B cell (primary cell): ENCODE measurements at regions of chr19 and their contacts with region 1.

Region 1: DNA sequence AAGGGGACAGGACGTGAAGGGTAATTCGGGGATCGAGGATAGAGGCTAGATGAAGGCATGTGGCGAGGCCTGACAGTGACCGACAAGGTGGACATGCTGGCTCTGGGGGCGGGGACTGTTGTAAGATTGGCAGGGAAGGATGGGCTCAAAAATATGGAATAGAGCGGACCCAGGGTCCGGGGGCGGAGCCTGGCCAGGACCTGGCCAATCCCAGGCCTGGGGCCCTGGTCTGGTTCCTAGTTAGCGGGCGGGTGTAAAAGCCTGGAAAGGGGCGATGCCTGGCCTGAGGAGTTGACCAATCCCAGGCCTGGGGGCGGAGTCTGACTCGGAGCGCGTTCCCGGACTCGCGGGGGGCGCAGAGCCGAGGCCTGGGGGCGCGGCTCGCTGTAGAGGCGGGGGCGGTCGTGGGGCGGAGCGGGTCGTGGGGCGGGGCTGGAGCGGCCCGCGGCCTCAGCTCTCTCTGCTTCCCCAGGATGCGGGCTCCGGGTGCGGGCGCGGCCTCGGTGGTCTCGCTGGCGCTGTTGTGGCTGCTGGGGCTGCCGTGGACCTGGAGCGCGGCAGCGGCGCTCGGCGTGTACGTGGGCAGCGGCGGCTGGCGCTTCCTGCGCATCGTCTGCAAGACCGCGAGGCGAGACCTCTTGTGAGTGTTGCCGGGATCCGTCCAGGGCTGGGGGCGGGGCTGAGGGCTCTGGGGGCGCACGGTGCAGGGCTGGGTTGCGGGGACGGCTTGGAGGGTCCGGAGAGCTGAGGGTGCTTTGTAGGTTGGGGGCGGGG is at the start of gene SLC27A1:
- DNase-seq: peak; percentile 94
- ATAC-seq: peak; percentile 78
- H3K4me3 ChIP-seq: peak within 1 kb of the TSS; percentile 30 to 81 (median 76)
- H3K4me3 Mint-ChIP-seq: peak within 1 kb of the TSS; percentile 92
- H3K27ac ChIP-seq: peak within 1 kb of the TSS; percentile 59 to 62
- H3K27ac Mint-ChIP-seq: peak within 1 kb of the TSS; percentile 90
- H3K4me1 ChIP-seq: peaks cover 6 to 22% of the 10 kb centered on the region in 2 donors
- H3K4me1 Mint-ChIP-seq: peaks cover 28% of the 10 kb centered on the region
- H3K27me3 ChIP-seq: no peaks in the 10 kb centered on the region
- H3K27me3 Mint-ChIP-seq: no peaks in the 10 kb centered on the region
- CTCF ChIP-seq: no peak
- total RNA-seq, gene SLC27A1: 9.5 and 11.5 TPM in 2 replicates

Region 2: GRCh38 chr19:17107525-17108452 is 362.5 kb before region 1 on chr19:
- CTCF ChIA-PET with region 1: no interaction called
- POLR2A ChIA-PET with region 1: no interaction called
- intact Hi-C with region 1: no loop called
- DNase-seq: peak; percentile 35
- ATAC-seq: no peak
- H3K4me3 ChIP-seq: no peak overlapping the region
- H3K4me3 Mint-ChIP-seq: peak overlapping the region; percentile 72
- H3K27ac ChIP-seq: peak overlapping the region; percentile 18 to 45
- H3K27ac Mint-ChIP-seq: peak overlapping the region; percentile 87
- H3K4me1 ChIP-seq: peaks cover 88 to 97% of the 10 kb centered on the region in 2 donors
- H3K4me1 Mint-ChIP-seq: peaks cover 87% of the 10 kb centered on the region
- H3K27me3 ChIP-seq: no peaks in the 10 kb centered on the region
- H3K27me3 Mint-ChIP-seq: no peaks in the 10 kb centered on the region
- CTCF ChIP-seq: no peak

Region 3: GRCh38 chr19:17135001-17135853 is 335.0 kb before region 1 on chr19:
- CTCF ChIA-PET with region 1: no interaction called
- POLR2A ChIA-PET with region 1: no interaction called
- intact Hi-C with region 1: no loop called
- DNase-seq: peak; percentile 88
- ATAC-seq: peak; percentile 88
- H3K4me3 ChIP-seq: peak overlapping the region in 3 of 5 experiments; percentile 22 to 49 (median 31)
- H3K4me3 Mint-ChIP-seq: peak overlapping the region; percentile 86
- H3K27ac ChIP-seq: peak overlapping the region; percentile 87 to 95
- H3K27ac Mint-ChIP-seq: peak overlapping the region; percentile 96
- H3K4me1 ChIP-seq: peaks cover 38 to 55% of the 10 kb centered on the region in 2 donors
- H3K4me1 Mint-ChIP-seq: peaks cover 60% of the 10 kb centered on the region
- H3K27me3 ChIP-seq: no peaks in the 10 kb centered on the region
- H3K27me3 Mint-ChIP-seq: no peaks in the 10 kb centered on the region
- CTCF ChIP-seq: no peak

Region 4: DNA sequence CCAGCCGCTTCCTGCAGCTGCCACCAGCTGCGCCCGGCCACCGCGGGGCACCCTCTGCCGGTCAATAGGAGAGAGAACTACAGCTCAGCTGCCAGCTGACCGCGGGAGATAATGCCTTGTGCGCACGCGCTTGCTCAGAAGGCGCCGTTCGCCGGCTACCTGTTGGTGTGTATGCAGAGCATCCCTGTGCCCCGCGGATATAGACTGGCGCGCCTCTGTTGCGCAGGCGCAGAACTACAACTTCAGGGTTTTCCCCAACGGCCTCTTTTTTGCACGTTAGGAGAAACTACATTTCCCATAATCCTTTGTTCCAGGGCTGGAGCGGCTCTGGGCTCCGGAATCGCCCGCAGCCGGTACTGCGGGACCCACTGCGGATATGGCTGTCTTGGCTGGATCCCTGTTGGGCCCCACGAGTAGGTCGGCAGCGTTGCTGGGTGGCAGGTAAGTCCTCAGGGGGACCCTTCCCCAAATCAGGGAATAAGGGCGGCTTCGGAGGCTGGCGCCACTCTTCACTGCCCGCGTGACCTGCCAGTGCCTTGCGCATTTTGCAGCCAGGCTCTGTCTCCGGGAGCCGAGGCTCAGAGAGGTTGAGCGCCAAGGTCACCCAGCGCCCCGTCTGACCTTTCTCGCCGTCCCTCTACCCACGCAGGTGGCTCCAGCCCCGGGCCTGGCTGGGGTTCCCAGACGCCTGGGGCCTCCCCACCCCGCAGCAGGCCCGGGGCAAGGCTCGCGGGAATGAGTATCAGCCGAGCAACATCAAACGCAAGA is 164.6 kb before region 1 on chr19 and contains the start of gene MRPL34:
- CTCF ChIA-PET with region 1: interaction called, 3 read pairs
- POLR2A ChIA-PET with region 1: no interaction called
- intact Hi-C with region 1: loop called (anchors 1 kb)
- DNase-seq: peak; percentile 100
- ATAC-seq: peak; percentile 69
- H3K4me3 ChIP-seq: peak within 1 kb of the TSS; percentile 49 to 74 (median 73)
- H3K4me3 Mint-ChIP-seq: peak within 1 kb of the TSS; percentile 91
- H3K27ac ChIP-seq: peak within 1 kb of the TSS; percentile 70 to 71
- H3K27ac Mint-ChIP-seq: peak within 1 kb of the TSS; percentile 90
- H3K4me1 ChIP-seq: peaks cover 38 to 56% of the 10 kb centered on the region in 2 donors
- H3K4me1 Mint-ChIP-seq: peaks cover 56% of the 10 kb centered on the region
- H3K27me3 ChIP-seq: no peaks in the 10 kb centered on the region
- H3K27me3 Mint-ChIP-seq: no peaks in the 10 kb centered on the region
- CTCF ChIP-seq: peak; percentile 76
- total RNA-seq, gene MRPL34: 40.7 and 45.7 TPM in 2 replicates

Region 5: GRCh38 chr19:17327651-17328516 is 142.4 kb before region 1 on chr19:
- CTCF ChIA-PET with region 1: no interaction called
- POLR2A ChIA-PET with region 1: no interaction called
- intact Hi-C with region 1: no loop called
- DNase-seq: peak; percentile 81
- ATAC-seq: peak; percentile 84
- H3K4me3 ChIP-seq: peak overlapping the region in 4 of 5 experiments; percentile 52 to 70 (median 65)
- H3K4me3 Mint-ChIP-seq: peak overlapping the region; percentile 83
- H3K27ac ChIP-seq: no peak overlapping the region
- H3K27ac Mint-ChIP-seq: peak overlapping the region; percentile 59
- H3K4me1 ChIP-seq: peaks cover 13 to 17% of the 10 kb centered on the region in 2 donors
- H3K4me1 Mint-ChIP-seq: peaks cover 13% of the 10 kb centered on the region
- H3K27me3 ChIP-seq: peaks cover 0 to 25% (median 1%) of the 10 kb centered on the region in 4 experiments
- H3K27me3 Mint-ChIP-seq: peaks cover 6% of the 10 kb centered on the region
- CTCF ChIP-seq: no peak

Region 6: GRCh38 chr19:17390665-17391370 is 79.4 kb before region 1 on chr19:
- CTCF ChIA-PET with region 1: interaction called, 14 read pairs
- POLR2A ChIA-PET with region 1: no interaction called
- intact Hi-C with region 1: loop called (anchors 1 kb)
- DNase-seq: peak; percentile 91
- ATAC-seq: peak; percentile 100
- H3K4me3 ChIP-seq: peak overlapping the region in 4 of 5 experiments; percentile 41 to 69 (median 58)
- H3K4me3 Mint-ChIP-seq: peak overlapping the region; percentile 91
- H3K27ac ChIP-seq: no peak overlapping the region
- H3K27ac Mint-ChIP-seq: peak overlapping the region; percentile 41
- H3K4me1 ChIP-seq: peaks cover 23 to 29% of the 10 kb centered on the region in 2 donors
- H3K4me1 Mint-ChIP-seq: peaks cover 21% of the 10 kb centered on the region
- H3K27me3 ChIP-seq: peaks cover 0 to 22% (median 9%) of the 10 kb centered on the region in 4 experiments
- H3K27me3 Mint-ChIP-seq: no peaks in the 10 kb centered on the region
- CTCF ChIP-seq: peak; percentile 68

Region 7: GRCh38 chr19:17448131-17448967 is 21.9 kb before region 1 on chr19 and contains the start of gene TMEM221:
- CTCF ChIA-PET with region 1: interaction called, 8 read pairs
- POLR2A ChIA-PET with region 1: no interaction called
- intact Hi-C with region 1: loop called (anchors 1 kb)
- DNase-seq: peak; percentile 73
- ATAC-seq: peak; percentile 86
- H3K4me3 ChIP-seq: peak within 1 kb of the TSS in 3 of 5 experiments; percentile 3 to 29 (median 15)
- H3K4me3 Mint-ChIP-seq: peak within 1 kb of the TSS; percentile 48
- H3K27ac ChIP-seq: no peak within 1 kb of the TSS
- H3K27ac Mint-ChIP-seq: no peak within 1 kb of the TSS
- H3K4me1 ChIP-seq: peaks cover 6 to 12% of the 10 kb centered on the region in 2 donors
- H3K4me1 Mint-ChIP-seq: peaks cover 13% of the 10 kb centered on the region
- H3K27me3 ChIP-seq: peaks cover 0 to 53% (median 15%) of the 10 kb centered on the region in 4 experiments
- H3K27me3 Mint-ChIP-seq: peaks cover 28% of the 10 kb centered on the region
- CTCF ChIP-seq: peak; percentile 68
- total RNA-seq, gene TMEM221: not detected in 2 replicates

Region 8: GRCh38 chr19:17522988-17523872 is 53.0 kb after region 1 on chr19:
- CTCF ChIA-PET with region 1: interaction called, 4 read pairs
- POLR2A ChIA-PET with region 1: interaction called, 5 read pairs
- intact Hi-C with region 1: loop called (anchors 1 kb)
- DNase-seq: peak; percentile 92
- ATAC-seq: peak; percentile 71
- H3K4me3 ChIP-seq: peak overlapping the region in 4 of 5 experiments; percentile 28 to 40 (median 34)
- H3K4me3 Mint-ChIP-seq: peak overlapping the region; percentile 80
- H3K27ac ChIP-seq: peak overlapping the region; percentile 75 to 88
- H3K27ac Mint-ChIP-seq: peak overlapping the region; percentile 97
- H3K4me1 ChIP-seq: peaks cover 51 to 56% of the 10 kb centered on the region in 2 donors
- H3K4me1 Mint-ChIP-seq: peaks cover 57% of the 10 kb centered on the region
- H3K27me3 ChIP-seq: no peaks in the 10 kb centered on the region
- H3K27me3 Mint-ChIP-seq: no peaks in the 10 kb centered on the region
- CTCF ChIP-seq: no peak

Region 9: DNA sequence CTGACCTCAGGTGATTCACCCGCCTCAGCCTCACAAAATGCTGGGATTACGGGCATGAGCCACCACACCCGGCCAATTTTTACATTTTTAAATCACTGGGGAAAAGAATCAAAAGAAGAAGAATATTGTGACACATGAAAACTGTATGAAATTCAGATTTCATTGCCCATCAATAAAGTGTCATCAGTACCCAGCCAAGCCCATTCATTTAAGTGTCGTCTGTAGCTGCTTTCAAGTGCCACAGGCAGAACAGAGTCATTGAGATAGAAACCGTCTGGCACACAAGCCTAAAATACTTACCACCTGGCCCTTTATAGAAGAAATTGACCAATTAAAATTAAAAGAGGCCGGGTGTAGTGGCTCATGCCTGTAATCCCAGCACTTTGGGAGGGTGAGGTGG is 100.5 kb after region 1 on chr19:
- CTCF ChIA-PET with region 1: interaction called, 18 read pairs
- POLR2A ChIA-PET with region 1: no interaction called
- intact Hi-C with region 1: no loop called
- DNase-seq: no peak
- ATAC-seq: no peak
- H3K4me3 ChIP-seq: no peak overlapping the region
- H3K4me3 Mint-ChIP-seq: no peak overlapping the region
- H3K27ac ChIP-seq: no peak overlapping the region
- H3K27ac Mint-ChIP-seq: no peak overlapping the region
- H3K4me1 ChIP-seq: no peaks in the 10 kb centered on the region
- H3K4me1 Mint-ChIP-seq: peaks cover 3% of the 10 kb centered on the region
- H3K27me3 ChIP-seq: no peaks in the 10 kb centered on the region
- H3K27me3 Mint-ChIP-seq: no peaks in the 10 kb centered on the region
- CTCF ChIP-seq: no peak